Left cardiac atrium (tissue), 4 donors: ENCODE measurements at regions of chr20 and their contacts with region 1.

Region 1: GRCh38 chr20:38321959-38322598 is 18.1 kb downstream of the BPI start:
- DNase-seq: peak; percentile 54
- ATAC-seq: peak; percentile 70 to 72

Region 2: DNA sequence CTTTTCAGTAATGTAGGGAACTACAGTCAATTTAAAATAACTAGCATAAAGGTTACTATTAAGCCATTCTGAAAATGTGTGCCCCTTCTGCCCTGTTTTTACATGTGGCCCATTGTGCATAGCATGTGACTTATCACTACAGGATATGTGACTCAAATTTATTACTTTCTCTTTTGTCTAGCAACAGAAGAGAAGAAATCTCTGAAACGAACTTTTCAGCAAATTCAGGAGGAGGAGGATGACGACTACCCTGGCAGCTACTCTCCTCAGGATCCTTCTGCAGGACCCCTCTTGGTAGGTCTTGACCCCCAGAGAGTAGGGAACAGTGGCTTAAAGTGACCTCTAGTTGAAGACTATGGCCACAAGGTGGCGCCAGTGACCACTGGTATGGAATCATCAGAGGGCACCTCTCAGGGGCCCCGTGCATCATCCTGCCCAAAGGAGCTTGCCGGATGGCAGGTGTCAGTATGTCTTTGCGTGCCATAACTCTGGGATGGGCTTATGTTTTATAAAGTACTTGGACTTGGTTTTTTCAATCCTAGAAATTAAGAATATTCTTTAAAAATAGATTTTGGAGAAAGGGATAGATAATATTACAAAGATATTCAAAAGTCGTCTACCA is 264.6 kb before region 1 on chr20:
- intact Hi-C with region 1: loop called in 1 of 2 experiments (anchors 5 kb)
- DNase-seq: peak; percentile 93
- ATAC-seq: peak; percentile 92 to 94

Region 3: DNA sequence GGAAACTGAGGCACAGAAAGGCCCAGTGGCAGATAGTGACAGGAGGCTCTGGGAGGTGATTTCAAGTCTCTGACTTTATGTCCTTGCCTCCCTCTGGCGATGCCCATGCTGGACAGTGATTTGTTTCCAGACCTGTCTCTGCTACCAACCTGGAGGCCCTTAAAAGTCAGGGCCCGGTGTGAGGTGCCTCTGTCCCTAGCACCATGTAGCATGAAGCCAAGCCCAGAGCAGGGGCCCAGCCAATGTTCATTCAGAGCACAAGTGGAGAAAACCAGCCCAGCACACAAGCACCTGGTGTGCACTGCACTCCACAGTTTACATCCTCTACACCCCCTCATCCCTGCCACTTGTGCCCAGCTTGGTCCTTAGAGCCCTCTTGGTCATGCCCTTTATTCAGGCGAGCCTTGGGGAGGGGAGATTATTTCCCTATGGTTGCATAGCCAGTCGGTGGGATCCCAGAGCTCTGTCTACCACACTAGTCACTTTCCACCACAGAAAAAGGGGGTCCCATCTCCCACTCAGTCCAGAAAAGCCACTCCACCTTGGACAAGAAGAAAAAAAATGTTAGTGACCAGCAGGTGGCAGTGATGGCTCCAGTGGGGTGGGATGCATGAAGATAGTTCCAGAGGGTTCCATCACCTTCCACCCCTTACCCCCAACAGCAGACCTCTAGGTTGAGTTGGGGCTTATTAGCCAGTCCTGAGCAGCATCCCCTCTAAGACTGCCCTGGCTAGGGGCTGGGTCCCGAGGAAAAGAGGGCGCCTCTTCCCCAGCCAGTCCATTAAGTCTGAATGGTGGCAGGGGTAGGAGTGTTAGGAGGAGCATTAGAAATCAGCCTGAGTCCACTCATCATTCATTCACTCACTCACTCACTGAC is 92.5 kb before region 1 on chr20:
- intact Hi-C with region 1: loop called in 1 of 2 experiments (anchors 5 kb)
- DNase-seq: peak; percentile 17
- ATAC-seq: no peak

Region 4: DNA sequence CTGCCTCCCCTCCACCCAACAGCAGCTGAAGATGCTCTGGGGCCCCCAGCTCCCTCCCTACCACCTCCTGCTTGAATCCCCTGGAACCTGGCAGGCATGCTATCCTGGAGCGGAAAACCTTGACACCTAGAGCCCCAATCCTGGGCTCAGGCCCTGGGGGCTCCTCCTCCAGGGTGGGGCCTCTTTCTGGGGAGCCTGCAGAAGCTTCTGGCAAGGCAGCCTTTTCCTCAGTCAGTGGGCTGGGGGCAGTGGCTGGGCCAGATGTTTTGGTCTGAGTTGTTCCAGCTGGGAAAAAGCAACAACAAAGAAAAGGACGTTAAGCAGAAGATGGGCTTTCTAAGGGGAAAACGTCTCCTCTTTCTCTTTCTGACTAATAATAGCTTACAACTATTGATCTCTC is 82.6 kb before region 1 on chr20:
- intact Hi-C with region 1: loop called in 1 of 2 experiments (anchors 5 kb)
- DNase-seq: no peak
- ATAC-seq: no peak